ENCODE measurements at regions of chr20 and their contacts with region 1.

Region 1: DNA sequence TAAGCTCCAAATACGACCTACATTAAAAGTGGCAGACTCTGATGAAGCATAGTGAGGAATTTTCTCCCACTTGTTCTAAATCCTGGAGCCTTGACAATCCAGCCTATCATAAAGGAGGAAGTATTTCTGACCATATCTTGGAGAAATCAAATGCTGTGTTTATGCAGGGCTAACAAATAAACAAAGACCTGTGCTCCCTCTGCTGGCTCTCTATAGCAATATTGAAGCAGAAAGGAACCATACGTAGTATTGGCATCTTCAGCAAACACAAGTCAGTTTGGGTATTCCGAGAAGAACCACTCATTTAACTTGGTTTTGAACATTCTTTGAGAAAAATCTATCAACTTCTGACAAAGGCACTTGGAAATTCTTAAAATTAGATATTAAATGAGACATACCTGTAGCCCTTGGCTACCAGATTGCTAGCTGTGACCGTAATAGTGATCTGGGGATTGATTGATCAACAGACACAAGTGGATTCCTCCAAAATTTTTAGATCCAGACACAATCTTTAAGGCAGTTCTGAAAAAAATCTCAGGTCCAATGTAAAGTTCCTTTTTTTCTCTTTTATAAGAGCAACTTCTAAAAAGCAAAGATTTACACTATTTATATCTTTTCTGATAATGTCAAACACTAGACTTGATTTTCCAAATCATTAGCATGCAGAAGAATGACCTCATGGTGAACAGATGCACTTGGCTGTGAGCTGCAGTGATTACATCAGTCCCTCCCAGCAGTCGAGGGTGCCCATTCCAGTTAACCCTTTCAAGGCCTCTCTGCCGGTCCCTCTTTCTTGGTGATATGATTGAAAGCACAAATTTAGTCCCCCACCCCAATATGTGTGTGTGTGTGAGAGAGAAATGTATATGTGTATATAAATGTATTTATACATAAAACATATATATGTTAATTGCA is 40.2 kb downstream of the INSM1 start:
- DNase-seq: no peak
- H3K4me3 Mint-ChIP-seq: no peak overlapping the region
- H3K27ac Mint-ChIP-seq: no peak overlapping the region
- H3K4me1 Mint-ChIP-seq: peaks cover 14% of the 10 kb centered on the region
- H3K27me3 Mint-ChIP-seq: no peaks in the 10 kb centered on the region

Region 2: DNA sequence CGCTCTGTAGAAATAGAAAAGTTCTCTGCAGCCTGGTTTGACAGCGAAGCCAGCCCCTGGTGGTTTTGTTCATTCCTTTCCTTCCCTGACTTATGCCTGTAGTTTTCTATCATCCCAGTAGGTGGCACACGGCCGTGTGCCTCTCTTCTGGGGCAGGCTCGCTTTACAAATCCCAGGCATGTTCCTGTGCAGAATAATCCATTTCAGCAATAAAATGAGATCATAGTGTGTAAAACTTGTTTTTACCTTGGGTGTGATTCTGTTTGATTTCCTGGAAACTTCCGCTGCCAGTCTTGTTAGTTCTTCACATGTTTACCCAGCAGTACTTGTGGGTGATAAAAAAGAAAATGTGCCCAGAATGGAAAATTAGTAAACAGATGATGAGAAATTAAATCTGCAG is 47.7 kb before region 1 on chr20:
- intact Hi-C with region 1: loop called (anchors 5 kb)
- DNase-seq: peak; percentile 74
- H3K4me3 Mint-ChIP-seq: no peak overlapping the region
- H3K27ac Mint-ChIP-seq: peak overlapping the region; percentile 1
- H3K4me1 Mint-ChIP-seq: peaks cover 26% of the 10 kb centered on the region
- H3K27me3 Mint-ChIP-seq: peaks cover 50% of the 10 kb centered on the region

Region 3: GRCh38 chr20:20369250-20370093 is 38.7 kb before region 1 on chr20:
- intact Hi-C with region 1: loop called (anchors 5 kb)
- DNase-seq: peak; percentile 62
- H3K4me3 Mint-ChIP-seq: peak overlapping the region; percentile 83
- H3K27ac Mint-ChIP-seq: peak overlapping the region; percentile 83
- H3K4me1 Mint-ChIP-seq: peaks cover 19% of the 10 kb centered on the region
- H3K27me3 Mint-ChIP-seq: peaks cover 56% of the 10 kb centered on the region

Region 4: GRCh38 chr20:20425823-20426654 is 17.9 kb after region 1 on chr20:
- intact Hi-C with region 1: loop called (anchors 2 kb)
- DNase-seq: no peak
- H3K4me3 Mint-ChIP-seq: peak overlapping the region; percentile 10
- H3K27ac Mint-ChIP-seq: peak overlapping the region; percentile 89
- H3K4me1 Mint-ChIP-seq: peaks cover 40% of the 10 kb centered on the region
- H3K27me3 Mint-ChIP-seq: no peaks in the 10 kb centered on the region

Region 5: DNA sequence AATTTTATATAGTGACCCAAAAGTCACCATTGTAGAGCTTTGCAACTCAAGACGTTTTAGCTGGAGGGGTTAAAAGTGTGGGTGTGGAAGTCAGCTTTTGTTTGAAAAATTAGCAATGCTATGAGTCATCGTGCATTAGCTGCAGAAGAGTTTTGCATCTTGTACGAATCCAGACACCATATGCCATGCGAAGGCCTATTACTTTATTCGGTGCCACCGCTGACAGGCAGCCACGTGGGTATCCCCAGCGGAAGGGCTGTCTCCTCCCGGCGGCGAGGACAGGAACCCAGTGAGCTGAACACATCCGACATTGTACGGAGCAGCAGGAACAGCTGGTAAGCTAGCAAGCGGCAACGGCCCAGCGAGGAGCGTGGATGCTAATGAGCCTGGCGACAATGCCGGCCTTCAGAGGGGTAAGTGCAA is 44.1 kb after region 1 on chr20:
- intact Hi-C with region 1: loop called (anchors 2 kb)
- DNase-seq: peak; percentile 86
- H3K4me3 Mint-ChIP-seq: peak overlapping the region; percentile 81
- H3K27ac Mint-ChIP-seq: peak overlapping the region; percentile 85
- H3K4me1 Mint-ChIP-seq: peaks cover 32% of the 10 kb centered on the region
- H3K27me3 Mint-ChIP-seq: no peaks in the 10 kb centered on the region

Region 6: GRCh38 chr20:20568604-20569205 is 160.6 kb after region 1 on chr20:
- intact Hi-C with region 1: loop called (anchors 2 kb)
- DNase-seq: peak; percentile 73
- H3K4me3 Mint-ChIP-seq: no peak overlapping the region
- H3K27ac Mint-ChIP-seq: no peak overlapping the region
- H3K4me1 Mint-ChIP-seq: peaks cover 12% of the 10 kb centered on the region
- H3K27me3 Mint-ChIP-seq: no peaks in the 10 kb centered on the region